AG04449 (cell line): ENCODE measurements at regions of chr13 and their contacts with region 1.

Region 1: DNA sequence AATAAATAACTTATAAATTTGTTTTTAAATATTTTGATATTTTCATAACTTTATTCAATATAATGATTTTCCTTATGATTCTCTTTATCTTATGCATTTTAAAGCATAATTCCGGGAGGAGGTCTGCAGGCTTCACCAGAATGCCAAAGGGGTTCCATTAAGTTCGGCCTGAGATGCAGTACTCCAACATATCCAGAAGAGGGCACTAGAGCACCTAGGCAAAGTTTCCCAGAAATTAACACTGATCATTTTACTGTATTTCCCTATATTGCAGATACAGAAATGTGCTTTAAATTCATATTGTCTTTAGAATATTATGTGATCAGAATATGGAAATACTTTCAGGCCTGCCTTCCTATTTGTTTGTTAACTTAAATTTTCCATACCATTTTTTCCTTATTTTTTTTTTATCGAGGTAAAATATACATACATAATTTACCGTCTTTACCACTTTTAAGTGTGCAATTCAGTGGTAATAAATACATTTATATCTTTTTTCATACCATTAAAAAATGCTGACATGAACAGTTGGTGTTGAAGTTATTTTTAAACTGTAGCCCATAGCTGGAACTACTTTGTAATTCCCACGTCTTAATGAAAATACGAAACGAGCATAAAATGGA is 58.9 kb upstream of the TM9SF2 start:
- DNase-seq: no peak
- H3K4me3 ChIP-seq: no peak overlapping the region
- CTCF ChIP-seq: peak; percentile 80

Region 2: GRCh38 chr13:99459099-99459850 is 16.9 kb after region 1 on chr13:
- CTCF ChIA-PET with region 1: interaction called, 21 read pairs
- POLR2A ChIA-PET with region 1: no interaction called
- DNase-seq: no peak
- H3K4me3 ChIP-seq: no peak overlapping the region
- CTCF ChIP-seq: no peak

Region 3: GRCh38 chr13:99758460-99759162 is 316.2 kb after region 1 on chr13:
- CTCF ChIA-PET with region 1: no interaction called
- POLR2A ChIA-PET with region 1: no interaction called
- DNase-seq: no peak
- H3K4me3 ChIP-seq: no peak overlapping the region
- CTCF ChIP-seq: no peak